Mammary epithelial cell (primary cell): ENCODE measurements at regions of chr6 and their contacts with region 1.

Region 1: GRCh38 chr6:22899442-22899841 is 330.1 kb downstream of the HDGFL1 start:
- DNase-seq: peak; percentile 26
- H3K4me3 ChIP-seq: no peak overlapping the region
- H3K27ac ChIP-seq: no peak overlapping the region
- H3K4me1 ChIP-seq: peaks cover 6% of the 10 kb centered on the region
- H3K27me3 ChIP-seq: no peaks in the 10 kb centered on the region
- CTCF ChIP-seq: no peak

Region 2: DNA sequence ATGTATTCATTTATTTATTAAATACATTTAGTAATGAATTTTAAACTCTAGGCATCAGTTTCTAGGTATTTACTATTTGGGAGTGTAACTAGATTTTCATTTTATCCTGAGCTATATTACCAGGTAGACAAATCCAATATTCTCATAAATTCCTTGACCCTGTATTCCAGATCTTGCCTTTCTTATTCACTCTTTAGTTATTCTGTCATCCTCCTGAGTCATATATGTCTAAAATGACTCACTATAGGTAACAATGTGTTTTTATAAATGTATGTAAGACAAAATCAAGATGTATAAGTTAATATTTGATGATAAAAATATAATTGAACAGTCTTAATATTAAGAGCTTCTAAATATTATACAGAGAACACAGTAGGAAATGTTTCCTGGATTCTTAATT is 584.5 kb after region 1 on chr6:
- CTCF ChIA-PET with region 1: interaction called, 17 read pairs
- dilution Hi-C with region 1: no loop called
- in situ Hi-C with region 1: no loop called
- intact Hi-C with region 1: no loop called
- DNase-seq: no peak
- H3K4me3 ChIP-seq: no peak overlapping the region
- H3K27ac ChIP-seq: no peak overlapping the region
- H3K4me1 ChIP-seq: no peaks in the 10 kb centered on the region
- H3K27me3 ChIP-seq: no peaks in the 10 kb centered on the region
- CTCF ChIP-seq: no peak